Heart right ventricle (tissue), 16 donors: ENCODE measurements at regions of chrX and their contacts with region 1.

Region 1: GRCh38 chrX:24395775-24396174 is 35.3 kb downstream of the SUPT20HL1 start:
- DNase-seq: peak in 1 of 2 donors; percentile 64
- ATAC-seq: peak; percentile 61 to 87 (median 82)
- H3K4me3 ChIP-seq: no peak overlapping the region
- H3K27ac ChIP-seq: peak overlapping the region in 3 of 10 donors; percentile 19 to 56 (median 44)
- H3K4me1 ChIP-seq: peaks cover 0 to 7% (median 0%) of the 10 kb centered on the region in 9 donors
- H3K27me3 ChIP-seq: peaks cover 0 to 59% (median 0%) of the 10 kb centered on the region in 7 donors
- CTCF ChIP-seq: peak; percentile 46 to 79 (median 74)

Region 2: GRCh38 chrX:24542756-24543155 is 147.0 kb after region 1 on chrX:
- intact Hi-C with region 1: no loop called
- DNase-seq: no peak
- ATAC-seq: peak in 1 of 8 donors; percentile 19
- H3K4me3 ChIP-seq: no peak overlapping the region
- H3K27ac ChIP-seq: no peak overlapping the region
- H3K4me1 ChIP-seq: peaks cover 0 to 6% (median 0%) of the 10 kb centered on the region in 9 donors
- H3K27me3 ChIP-seq: peaks cover 0 to 8% (median 0%) of the 10 kb centered on the region in 7 donors
- CTCF ChIP-seq: no peak

Region 3: GRCh38 chrX:24561121-24561520 is 165.3 kb after region 1 on chrX:
- intact Hi-C with region 1: loop called in 2 of 10 experiments (anchors 5 kb)
- DNase-seq: no peak
- ATAC-seq: no peak
- H3K4me3 ChIP-seq: no peak overlapping the region
- H3K27ac ChIP-seq: no peak overlapping the region
- H3K4me1 ChIP-seq: no peaks in the 10 kb centered on the region
- H3K27me3 ChIP-seq: no peaks in the 10 kb centered on the region
- CTCF ChIP-seq: peak in 4 of 9 donors; percentile 18 to 38 (median 24)